ENCODE measurements at regions of chr7 and their contacts with region 1.

Region 1: GRCh38 chr7:108384721-108385481 is 71.3 kb downstream of the NRCAM start:
- DNase-seq: no peak
- ATAC-seq: peak; percentile 96
- H3K4me3 ChIP-seq: no peak overlapping the region
- H3K27ac ChIP-seq: no peak overlapping the region
- H3K4me1 ChIP-seq: no peaks in the 10 kb centered on the region; the same call in 1 of the 2 replicates
- H3K27me3 ChIP-seq: no peaks in the 10 kb centered on the region
- CTCF ChIP-seq: peak; percentile 43 to 51 (median 45); a peak in 4 of 6 replicates
- EP300 ChIP-seq: no peak
- POLR2A ChIP-seq: no peak
- RAD21 ChIP-seq: peak; percentile 71

Region 2: DNA sequence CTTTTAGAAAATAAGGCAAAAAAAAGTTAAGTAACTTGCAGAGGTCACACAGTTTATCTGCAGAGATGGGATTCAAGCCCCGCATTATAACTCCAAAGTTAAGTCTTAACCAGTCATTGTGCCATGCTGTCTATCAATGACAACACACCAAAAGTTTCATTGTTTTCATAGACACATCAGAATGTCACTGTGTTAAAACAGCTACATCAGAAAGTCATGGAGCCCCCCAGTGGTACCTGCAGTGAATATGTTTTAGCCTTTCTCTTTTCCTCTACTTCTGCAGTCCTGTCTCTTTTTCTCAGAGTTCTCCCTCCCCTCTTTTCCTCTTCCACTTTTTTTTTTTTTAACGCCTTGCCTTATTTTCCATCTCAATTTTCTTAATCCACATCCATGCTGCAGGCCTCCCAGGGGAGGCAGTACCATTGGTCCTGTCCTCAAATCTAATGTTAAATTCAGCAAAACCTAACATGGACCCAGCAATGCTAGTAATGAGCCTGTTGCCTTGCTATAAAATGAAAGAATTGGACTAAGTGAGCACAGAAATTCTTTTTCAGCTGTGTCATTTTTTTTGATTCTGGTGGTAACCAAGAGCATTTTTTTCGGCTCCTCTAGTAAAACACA is 75.1 kb after region 1 on chr7:
- CTCF ChIA-PET with region 1: interaction called, 11 read pairs
- POLR2A ChIA-PET with region 1: no interaction called
- RAD21 ChIA-PET with region 1: interaction called, 5 read pairs
- SMC1A ChIA-PET with region 1: interaction called, 6 read pairs
- in situ Hi-C with region 1: no loop called
- intact Hi-C with region 1: no loop called
- DNase-seq: no peak
- ATAC-seq: peak; percentile 77
- H3K4me3 ChIP-seq: no peak overlapping the region
- H3K27ac ChIP-seq: no peak overlapping the region
- H3K4me1 ChIP-seq: no peaks in the 10 kb centered on the region
- H3K27me3 ChIP-seq: peaks cover 11 to 16% of the 10 kb centered on the region in 2 experiments
- CTCF ChIP-seq: peak; percentile 50 to 73 (median 60); a peak in 5 of 6 replicates
- EP300 ChIP-seq: no peak
- POLR2A ChIP-seq: no peak
- RAD21 ChIP-seq: peak; percentile 82

Region 3: GRCh38 chr7:108477696-108478095 is 92.8 kb after region 1 on chr7:
- CTCF ChIA-PET with region 1: no interaction called
- POLR2A ChIA-PET with region 1: no interaction called
- RAD21 ChIA-PET with region 1: no interaction called
- SMC1A ChIA-PET with region 1: no interaction called
- in situ Hi-C with region 1: no loop called
- intact Hi-C with region 1: no loop called
- DNase-seq: no peak
- ATAC-seq: no peak
- H3K4me3 ChIP-seq: no peak overlapping the region
- H3K27ac ChIP-seq: no peak overlapping the region
- H3K4me1 ChIP-seq: no peaks in the 10 kb centered on the region
- H3K27me3 ChIP-seq: no peaks in the 10 kb centered on the region
- CTCF ChIP-seq: no peak
- EP300 ChIP-seq: no peak
- POLR2A ChIP-seq: no peak
- RAD21 ChIP-seq: no peak

Measured in GM12878 (cell line).